CD8-positive, alpha-beta T cell (primary cell): ENCODE measurements at regions of chr6 and their contacts with region 1.

Region 1: DNA sequence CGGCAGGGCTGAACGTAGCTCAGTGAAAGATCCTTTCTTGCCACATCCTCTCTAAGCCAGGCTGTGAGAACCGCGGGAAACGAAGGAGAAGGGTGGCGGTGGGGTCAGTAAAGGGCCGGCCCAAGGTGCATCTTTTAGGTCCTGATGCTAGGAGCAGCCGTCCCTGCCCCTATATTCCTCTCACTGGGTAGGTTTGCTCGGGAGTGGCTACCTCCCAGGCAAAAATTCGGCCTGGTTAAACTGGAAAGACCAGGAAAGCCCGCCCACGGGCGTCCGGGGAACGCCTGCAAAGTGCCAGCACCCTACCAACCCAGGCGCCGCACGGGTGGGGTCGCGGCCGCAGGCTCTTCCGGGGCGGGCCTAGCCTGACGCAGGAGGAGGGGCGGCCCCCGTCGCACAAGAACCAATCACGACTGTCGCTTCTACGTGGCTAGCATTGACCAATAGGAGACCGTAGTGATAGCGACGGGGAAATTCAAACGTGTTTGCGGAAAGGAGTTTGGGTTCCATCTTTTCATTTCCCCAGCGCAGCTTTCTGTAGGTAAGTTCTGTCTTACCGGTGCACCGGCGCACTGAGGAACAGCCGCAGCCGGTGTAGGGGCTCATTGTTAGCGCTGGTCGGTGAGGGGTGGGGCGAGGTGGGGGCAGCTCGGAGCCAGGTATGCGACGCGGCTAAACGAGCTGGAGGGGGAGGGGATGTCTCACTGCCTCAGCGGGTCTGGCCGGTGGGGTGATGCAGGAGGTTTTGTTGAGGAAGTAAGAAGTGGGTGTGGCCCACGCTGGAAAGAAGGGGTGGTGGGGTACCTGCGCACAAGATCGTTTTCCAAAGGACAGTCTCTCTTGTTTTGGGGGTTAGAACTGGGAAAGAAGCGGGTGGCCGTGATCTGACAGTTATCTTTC is at the start of gene TTK:
- DNase-seq: peak; percentile 85 to 97 (median 90)
- ATAC-seq: peak; percentile 97
- H3K4me3 ChIP-seq: peak within 1 kb of the TSS; percentile 76 to 86
- H3K4me3 Mint-ChIP-seq: peak within 1 kb of the TSS; percentile 87
- H3K27ac ChIP-seq: peak within 1 kb of the TSS; percentile 84 to 95
- H3K27ac Mint-ChIP-seq: peak within 1 kb of the TSS; percentile 95
- H3K4me1 ChIP-seq: peaks cover 11% of the 10 kb centered on the region
- H3K4me1 Mint-ChIP-seq: peaks cover 24% of the 10 kb centered on the region
- H3K27me3 ChIP-seq: no peaks in the 10 kb centered on the region
- H3K27me3 Mint-ChIP-seq: peaks cover 5% of the 10 kb centered on the region
- CTCF ChIP-seq: no peak
- total RNA-seq, gene TTK: 0.30 to 0.97 TPM

Region 2: DNA sequence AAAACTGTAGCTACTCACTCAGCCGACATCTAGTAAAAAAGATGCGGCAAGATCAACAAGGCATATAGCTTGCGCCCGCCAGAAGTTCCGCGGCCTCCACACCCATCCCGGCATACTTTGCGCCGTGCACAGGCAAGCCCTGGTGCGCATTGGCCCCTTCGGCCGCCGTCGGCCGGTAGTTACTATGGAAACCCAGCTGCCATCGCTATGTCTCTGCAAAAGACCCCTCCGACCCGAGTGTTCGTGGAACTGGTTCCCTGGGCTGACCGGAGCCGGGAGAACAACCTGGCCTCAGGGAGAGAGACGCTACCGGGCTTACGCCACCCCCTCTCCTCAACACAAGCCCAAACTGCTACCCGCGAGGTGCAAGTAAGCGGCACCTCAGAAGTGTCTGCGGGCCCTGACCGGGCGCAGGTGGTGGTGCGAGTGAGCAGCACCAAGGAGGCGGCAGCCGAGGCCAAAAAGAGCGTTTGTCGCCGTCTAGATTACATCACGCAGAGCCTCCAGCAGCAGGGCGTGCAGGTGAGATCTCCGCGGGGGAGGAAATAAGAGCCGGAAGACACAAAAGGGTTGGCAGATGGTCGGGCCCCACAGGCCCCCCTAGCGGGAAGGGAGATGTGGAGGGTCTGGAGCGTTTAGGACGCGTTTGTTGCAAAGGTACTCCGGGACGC is 1136.9 kb before region 1 on chr6 and contains the start of gene IRAK1BP1:
- CTCF ChIA-PET with region 1: no interaction called
- POLR2A ChIA-PET with region 1: no interaction called
- intact Hi-C with region 1: loop called in 1 of 2 experiments (anchors 2 kb)
- DNase-seq: peak; percentile 58 to 86 (median 77)
- ATAC-seq: peak; percentile 91
- H3K4me3 ChIP-seq: peak within 1 kb of the TSS; percentile 83 to 88
- H3K4me3 Mint-ChIP-seq: peak within 1 kb of the TSS; percentile 96
- H3K27ac ChIP-seq: peak within 1 kb of the TSS; percentile 76 to 88
- H3K27ac Mint-ChIP-seq: peak within 1 kb of the TSS; percentile 95
- H3K4me1 ChIP-seq: peaks cover 10% of the 10 kb centered on the region
- H3K4me1 Mint-ChIP-seq: peaks cover 27% of the 10 kb centered on the region
- H3K27me3 ChIP-seq: no peaks in the 10 kb centered on the region
- H3K27me3 Mint-ChIP-seq: no peaks in the 10 kb centered on the region
- CTCF ChIP-seq: no peak
- total RNA-seq, gene IRAK1BP1: 1.0 to 1.3 TPM

Region 3: DNA sequence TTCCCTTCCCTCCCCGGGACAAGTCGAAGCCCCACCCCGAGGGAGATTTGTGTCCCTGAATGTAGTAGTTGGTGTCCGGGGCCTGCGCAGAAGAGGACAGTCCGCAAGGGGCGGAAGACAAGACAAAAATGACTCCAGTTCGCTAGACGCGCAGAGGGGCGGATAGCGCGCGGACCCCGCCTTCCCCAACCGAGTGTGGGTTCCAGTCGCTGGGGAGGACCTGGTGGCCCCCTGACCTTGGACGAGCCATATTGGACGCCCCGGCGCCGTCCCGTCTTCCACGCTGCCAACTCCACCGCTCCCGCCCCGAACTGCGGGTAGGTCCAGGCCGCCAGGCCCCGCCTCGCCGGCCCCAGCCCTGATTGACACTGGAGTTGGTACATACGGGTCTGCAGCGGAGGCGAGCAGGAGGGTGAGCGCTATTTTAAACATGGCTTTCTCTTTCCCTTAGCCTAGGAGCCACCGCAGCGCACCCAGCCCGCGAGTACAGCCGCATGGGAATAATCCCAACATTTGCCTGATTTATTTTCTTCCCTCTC is 770.7 kb before region 1 on chr6:
- CTCF ChIA-PET with region 1: no interaction called
- POLR2A ChIA-PET with region 1: no interaction called
- intact Hi-C with region 1: loop called (anchors 5 to 10 kb)
- DNase-seq: peak; percentile 14 to 80 (median 62)
- ATAC-seq: peak; percentile 44
- H3K4me3 ChIP-seq: peak overlapping the region; percentile 66 to 98
- H3K4me3 Mint-ChIP-seq: peak overlapping the region; percentile 99
- H3K27ac ChIP-seq: peak overlapping the region; percentile 46 to 66
- H3K27ac Mint-ChIP-seq: peak overlapping the region; percentile 84
- H3K4me1 ChIP-seq: peaks cover 7% of the 10 kb centered on the region
- H3K4me1 Mint-ChIP-seq: peaks cover 33% of the 10 kb centered on the region
- H3K27me3 ChIP-seq: no peaks in the 10 kb centered on the region
- H3K27me3 Mint-ChIP-seq: no peaks in the 10 kb centered on the region
- CTCF ChIP-seq: no peak

Region 4: DNA sequence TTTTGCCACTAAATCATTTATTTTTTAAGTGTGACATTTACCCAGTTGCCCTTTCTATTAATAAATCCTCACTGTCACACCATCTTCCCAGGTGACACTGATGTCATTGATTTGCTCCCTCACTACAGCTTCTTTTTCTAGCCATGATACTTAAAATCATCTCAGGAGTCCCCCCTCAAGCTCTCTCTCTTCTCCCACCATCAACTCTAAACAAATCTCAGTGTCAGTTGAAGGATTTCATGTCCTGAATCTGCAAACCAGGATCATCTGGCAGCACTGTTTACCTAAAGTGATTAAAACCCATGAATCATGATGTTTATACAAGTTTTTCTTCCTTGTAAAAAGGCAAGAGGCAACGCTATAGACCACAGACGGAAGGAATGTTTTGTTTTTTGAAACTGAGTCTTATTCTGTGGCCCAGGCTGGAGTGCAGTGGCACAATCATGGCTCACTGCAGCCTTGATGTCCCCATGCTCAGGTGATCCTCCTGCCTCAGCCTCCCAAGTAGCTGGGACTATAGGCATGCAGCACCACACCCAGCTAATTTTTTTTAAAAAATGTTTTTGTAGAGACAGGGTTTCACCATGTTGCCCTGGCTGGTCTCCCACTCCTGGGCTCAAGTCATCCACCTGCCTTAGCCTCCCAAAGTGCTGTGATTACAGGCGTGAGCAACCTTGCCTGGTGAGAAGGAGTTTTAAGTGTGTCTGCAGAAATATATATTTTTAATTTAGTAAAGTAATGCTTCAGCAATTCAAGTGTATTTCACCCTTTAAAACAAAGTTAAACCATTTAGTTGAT is 403.4 kb before region 1 on chr6:
- CTCF ChIA-PET with region 1: no interaction called
- POLR2A ChIA-PET with region 1: no interaction called
- intact Hi-C with region 1: no loop called
- DNase-seq: no peak
- ATAC-seq: no peak
- H3K4me3 ChIP-seq: no peak overlapping the region
- H3K4me3 Mint-ChIP-seq: no peak overlapping the region
- H3K27ac ChIP-seq: no peak overlapping the region
- H3K27ac Mint-ChIP-seq: no peak overlapping the region
- H3K4me1 ChIP-seq: no peaks in the 10 kb centered on the region
- H3K4me1 Mint-ChIP-seq: no peaks in the 10 kb centered on the region
- H3K27me3 ChIP-seq: no peaks in the 10 kb centered on the region
- H3K27me3 Mint-ChIP-seq: peaks cover 3% of the 10 kb centered on the region
- CTCF ChIP-seq: no peak

Region 5: DNA sequence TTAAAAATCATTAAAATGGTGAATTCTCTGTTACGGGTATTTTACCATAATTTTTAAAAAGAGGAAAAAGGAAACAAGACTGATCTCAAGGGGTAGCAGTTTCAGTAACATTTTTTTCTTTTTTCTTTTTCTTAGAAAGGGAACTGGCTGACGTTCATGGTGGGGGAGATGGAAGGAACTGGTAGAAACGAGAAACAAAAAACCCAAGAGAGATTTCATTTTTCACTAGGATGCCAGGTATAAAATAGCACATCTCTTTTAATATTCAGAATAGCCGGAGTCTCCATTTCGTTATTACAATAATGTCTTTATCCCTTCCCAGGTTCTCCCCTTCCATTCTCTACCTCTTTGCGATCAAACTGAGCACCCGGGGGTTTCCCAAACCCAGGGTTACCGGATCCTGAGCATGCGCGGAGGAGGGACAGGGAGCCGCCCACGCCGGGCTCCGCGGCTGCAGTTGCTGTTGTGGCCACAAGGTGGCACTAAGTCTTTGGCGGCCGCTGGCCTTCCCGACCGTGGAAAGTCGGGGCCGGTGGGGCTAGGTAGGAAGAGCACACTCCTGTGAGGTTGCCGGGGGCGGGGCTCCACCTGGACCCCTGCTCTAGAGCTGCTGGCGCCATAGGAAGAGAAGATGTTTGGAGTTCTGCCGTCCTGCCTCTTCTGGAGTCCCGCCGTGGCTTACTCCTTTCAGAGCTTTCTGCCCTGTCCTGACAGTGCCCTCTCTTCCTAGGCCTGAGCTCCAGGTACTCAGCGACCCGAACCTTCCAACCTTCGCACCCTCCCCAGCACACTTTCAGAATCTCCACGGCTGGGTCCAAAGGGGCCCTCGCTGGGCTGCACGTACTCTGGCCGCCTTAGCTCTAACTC is 226.5 kb before region 1 on chr6:
- CTCF ChIA-PET with region 1: no interaction called
- POLR2A ChIA-PET with region 1: no interaction called
- intact Hi-C with region 1: loop called in 1 of 2 experiments (anchors 5 kb)
- DNase-seq: peak; percentile 65 to 90 (median 82)
- ATAC-seq: peak; percentile 97
- H3K4me3 ChIP-seq: peak overlapping the region; percentile 36 to 38
- H3K4me3 Mint-ChIP-seq: peak overlapping the region; percentile 78
- H3K27ac ChIP-seq: no peak overlapping the region
- H3K27ac Mint-ChIP-seq: no peak overlapping the region
- H3K4me1 ChIP-seq: peaks cover 4% of the 10 kb centered on the region
- H3K4me1 Mint-ChIP-seq: peaks cover 6% of the 10 kb centered on the region
- H3K27me3 ChIP-seq: no peaks in the 10 kb centered on the region
- H3K27me3 Mint-ChIP-seq: peaks cover 2% of the 10 kb centered on the region
- CTCF ChIP-seq: peak; percentile 94

Region 6: GRCh38 chr6:79895382-79896074 is 108.9 kb before region 1 on chr6:
- CTCF ChIA-PET with region 1: no interaction called
- POLR2A ChIA-PET with region 1: no interaction called
- intact Hi-C with region 1: no loop called
- DNase-seq: no peak
- ATAC-seq: no peak
- H3K4me3 ChIP-seq: no peak overlapping the region
- H3K4me3 Mint-ChIP-seq: no peak overlapping the region
- H3K27ac ChIP-seq: no peak overlapping the region
- H3K27ac Mint-ChIP-seq: no peak overlapping the region
- H3K4me1 ChIP-seq: no peaks in the 10 kb centered on the region
- H3K4me1 Mint-ChIP-seq: no peaks in the 10 kb centered on the region
- H3K27me3 ChIP-seq: no peaks in the 10 kb centered on the region
- H3K27me3 Mint-ChIP-seq: peaks cover 5% of the 10 kb centered on the region
- CTCF ChIP-seq: no peak

Region 7: GRCh38 chr6:79928478-79928998 is 75.9 kb before region 1 on chr6:
- CTCF ChIA-PET with region 1: no interaction called
- POLR2A ChIA-PET with region 1: no interaction called
- intact Hi-C with region 1: no loop called
- DNase-seq: no peak
- ATAC-seq: no peak
- H3K4me3 ChIP-seq: no peak overlapping the region
- H3K4me3 Mint-ChIP-seq: no peak overlapping the region
- H3K27ac ChIP-seq: no peak overlapping the region
- H3K27ac Mint-ChIP-seq: no peak overlapping the region
- H3K4me1 ChIP-seq: peaks cover 4% of the 10 kb centered on the region
- H3K4me1 Mint-ChIP-seq: peaks cover 12% of the 10 kb centered on the region
- H3K27me3 ChIP-seq: no peaks in the 10 kb centered on the region
- H3K27me3 Mint-ChIP-seq: no peaks in the 10 kb centered on the region
- CTCF ChIP-seq: no peak

Region 8: GRCh38 chr6:79949233-79949632 is 55.2 kb before region 1 on chr6:
- CTCF ChIA-PET with region 1: interaction called, 13 read pairs
- POLR2A ChIA-PET with region 1: interaction called, 8 read pairs
- intact Hi-C with region 1: loop called (anchors 1 to 2 kb)
- DNase-seq: peak in 7 of 9 experiments; percentile 25 to 88 (median 57)
- ATAC-seq: peak; percentile 24
- H3K4me3 ChIP-seq: no peak overlapping the region
- H3K4me3 Mint-ChIP-seq: peak overlapping the region; percentile 9
- H3K27ac ChIP-seq: no peak overlapping the region
- H3K27ac Mint-ChIP-seq: peak overlapping the region; percentile 5
- H3K4me1 ChIP-seq: peaks cover 16% of the 10 kb centered on the region
- H3K4me1 Mint-ChIP-seq: peaks cover 27% of the 10 kb centered on the region
- H3K27me3 ChIP-seq: no peaks in the 10 kb centered on the region
- H3K27me3 Mint-ChIP-seq: peaks cover 2% of the 10 kb centered on the region
- CTCF ChIP-seq: peak; percentile 80